A673 (cell line): ENCODE measurements at regions of chr7 and their contacts with region 1.

Region 1: GRCh38 chr7:36670585-36671431 is 53.5 kb downstream of the AOAH start:
- DNase-seq: peak; percentile 68
- H3K4me3 ChIP-seq: no peak overlapping the region
- H3K27ac ChIP-seq: no peak overlapping the region
- H3K4me1 ChIP-seq: no peaks in the 10 kb centered on the region
- H3K27me3 ChIP-seq: peaks cover 6% of the 10 kb centered on the region
- CTCF ChIP-seq: peak; percentile 87

Region 2: GRCh38 chr7:36473454-36474282 is 197.1 kb before region 1 on chr7:
- CTCF ChIA-PET with region 1: interaction called, 5 read pairs
- POLR2A ChIA-PET with region 1: no interaction called
- intact Hi-C with region 1: loop called (anchors 5 kb)
- DNase-seq: peak; percentile 57
- H3K4me3 ChIP-seq: no peak overlapping the region
- H3K27ac ChIP-seq: no peak overlapping the region
- H3K4me1 ChIP-seq: no peaks in the 10 kb centered on the region
- H3K27me3 ChIP-seq: no peaks in the 10 kb centered on the region
- CTCF ChIP-seq: peak; percentile 78